Lower leg skin (tissue), 4 donors: ENCODE measurements at regions of chr14 and their contacts with region 1.

Region 1: DNA sequence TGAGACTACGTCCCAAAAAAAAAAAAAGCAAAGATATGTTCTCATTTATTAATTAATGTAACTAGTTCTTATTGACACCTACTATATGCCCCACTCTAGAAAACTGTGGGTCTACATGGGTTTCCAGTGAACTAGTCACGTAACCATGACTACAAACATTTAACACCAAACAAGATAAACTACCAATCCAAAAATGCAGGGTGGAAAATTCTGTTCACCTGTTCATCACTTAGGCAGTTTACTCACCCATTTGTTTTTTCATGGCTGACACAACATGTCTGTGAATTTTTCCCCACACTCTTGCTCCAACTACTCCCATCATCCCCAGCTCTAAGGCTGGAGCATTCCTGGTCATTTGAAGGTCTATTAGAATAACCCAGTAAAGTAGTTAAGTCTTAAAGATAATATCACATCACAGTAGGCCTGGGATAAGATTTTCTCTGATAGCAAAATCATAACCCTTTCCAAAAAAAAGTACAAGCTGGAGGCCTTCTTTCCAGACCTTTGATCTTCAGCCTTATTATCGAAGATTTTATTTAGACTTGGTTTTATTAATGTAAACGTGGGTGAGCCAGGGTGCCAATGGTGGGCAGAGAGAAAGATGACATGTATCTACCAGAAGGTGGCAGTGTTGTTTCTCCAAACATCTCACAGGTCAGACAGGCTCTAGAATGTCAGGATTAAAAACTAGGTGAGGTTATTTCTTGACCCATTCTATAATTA is 61.6 kb upstream of the DAAM1 start:
- DNase-seq: peak in 1 of 2 donors; percentile 25
- H3K4me3 ChIP-seq: no peak overlapping the region
- CTCF ChIP-seq: peak in 1 of 3 donors; percentile 35
- POLR2A ChIP-seq: no peak

Region 2: DNA sequence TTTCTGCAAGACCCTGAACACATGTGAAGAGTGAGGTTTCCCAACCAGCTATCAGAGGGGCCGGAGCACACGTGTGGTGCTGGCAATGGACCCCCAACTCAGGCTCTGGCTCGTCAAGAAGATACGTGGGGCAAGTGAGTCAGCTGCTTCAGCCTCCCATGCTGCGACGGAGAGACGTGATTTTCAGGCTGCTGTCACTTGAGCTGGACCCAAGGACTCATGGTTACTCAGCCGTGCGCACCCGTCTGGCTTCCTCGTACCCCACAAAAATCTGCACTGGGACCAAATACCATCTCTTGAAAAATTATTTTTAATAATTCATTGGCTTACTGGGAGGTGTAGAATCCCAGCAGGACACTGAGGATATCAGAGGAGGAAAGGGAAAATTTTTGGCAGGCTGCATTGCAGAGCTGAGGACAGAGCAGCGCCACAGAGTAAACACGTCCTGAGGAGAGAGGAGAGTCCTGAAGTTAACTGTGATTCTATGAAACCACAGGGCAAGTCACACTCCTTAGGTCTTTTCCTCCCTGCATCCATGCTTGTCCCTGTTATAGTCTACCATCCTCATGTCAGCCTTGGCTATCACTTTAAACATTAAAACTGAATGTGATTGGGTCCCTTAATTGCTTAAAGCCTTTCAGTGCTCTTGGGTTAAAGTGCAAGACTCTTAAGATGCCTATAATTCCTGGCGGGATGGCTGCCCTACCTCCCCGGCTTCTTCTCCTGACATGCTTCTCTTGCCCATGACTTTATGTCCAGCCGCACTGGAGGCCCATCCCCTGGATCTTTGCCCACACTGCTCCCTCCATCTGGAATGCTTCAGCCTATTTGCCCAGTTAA is 1165.7 kb before region 1 on chr14:
- intact Hi-C with region 1: no loop called
- DNase-seq: no peak
- H3K4me3 ChIP-seq: no peak overlapping the region
- CTCF ChIP-seq: no peak
- POLR2A ChIP-seq: no peak

Region 3: GRCh38 chr14:59439256-59439965 is 312.5 kb after region 1 on chr14:
- intact Hi-C with region 1: loop called (anchors 2 kb)
- DNase-seq: no peak
- H3K4me3 ChIP-seq: no peak overlapping the region
- CTCF ChIP-seq: no peak
- POLR2A ChIP-seq: no peak